Ovary (tissue), 10 donors: ENCODE measurements at regions of chr3 and their contacts with region 1.

Region 1: GRCh38 chr3:74329096-74329495 is 285.4 kb downstream of the CNTN3 start:
- DNase-seq: no peak
- H3K4me3 ChIP-seq: no peak overlapping the region
- H3K27ac ChIP-seq: no peak overlapping the region
- H3K4me1 ChIP-seq: no peaks in the 10 kb centered on the region
- H3K27me3 ChIP-seq: no peaks in the 10 kb centered on the region
- CTCF ChIP-seq: no peak
- EP300 ChIP-seq: no peak
- POLR2A ChIP-seq: no peak

Region 2: GRCh38 chr3:74021449-74021848 is 307.6 kb before region 1 on chr3:
- intact Hi-C with region 1: no loop called
- DNase-seq: no peak
- H3K4me3 ChIP-seq: no peak overlapping the region
- H3K27ac ChIP-seq: no peak overlapping the region
- H3K4me1 ChIP-seq: no peaks in the 10 kb centered on the region
- H3K27me3 ChIP-seq: no peaks in the 10 kb centered on the region
- CTCF ChIP-seq: no peak
- EP300 ChIP-seq: no peak
- POLR2A ChIP-seq: no peak

Region 3: DNA sequence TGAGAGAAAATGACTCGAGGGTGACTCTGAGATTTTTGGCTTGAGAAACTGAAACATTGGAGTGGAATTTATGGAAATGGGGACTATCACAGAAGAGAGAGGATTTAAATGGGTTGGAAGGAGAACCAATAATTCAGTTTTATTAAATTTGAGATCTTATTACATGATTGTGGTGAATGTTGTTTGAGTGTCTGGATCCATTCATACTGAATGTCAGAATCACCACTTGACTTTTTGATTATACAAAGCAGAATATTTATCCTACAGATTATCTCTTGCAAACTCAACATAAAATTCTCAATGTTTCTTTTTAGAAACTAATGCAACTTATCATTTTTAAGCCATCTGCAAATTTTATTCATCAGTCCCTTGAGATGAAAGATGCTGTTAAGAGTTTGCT is 47.4 kb before region 1 on chr3:
- intact Hi-C with region 1: loop called in 1 of 4 experiments (anchors 2 kb)
- DNase-seq: no peak
- H3K4me3 ChIP-seq: no peak overlapping the region
- H3K27ac ChIP-seq: no peak overlapping the region
- H3K4me1 ChIP-seq: no peaks in the 10 kb centered on the region
- H3K27me3 ChIP-seq: no peaks in the 10 kb centered on the region
- CTCF ChIP-seq: no peak
- EP300 ChIP-seq: no peak
- POLR2A ChIP-seq: no peak

Region 4: GRCh38 chr3:74605439-74605838 is 276.3 kb after region 1 on chr3:
- intact Hi-C with region 1: no loop called
- DNase-seq: no peak
- H3K4me3 ChIP-seq: no peak overlapping the region
- H3K27ac ChIP-seq: no peak overlapping the region
- H3K4me1 ChIP-seq: no peaks in the 10 kb centered on the region
- H3K27me3 ChIP-seq: no peaks in the 10 kb centered on the region
- CTCF ChIP-seq: no peak
- EP300 ChIP-seq: no peak
- POLR2A ChIP-seq: no peak